Mammary epithelial cell (primary cell): ENCODE measurements at regions of chr3 and their contacts with region 1.

Region 1: GRCh38 chr3:50550079-50550741 is 17.3 kb downstream of the C3orf18 start:
- DNase-seq: peak; percentile 13
- H3K4me3 ChIP-seq: no peak overlapping the region
- H3K27ac ChIP-seq: no peak overlapping the region
- H3K4me1 ChIP-seq: peaks cover 19% of the 10 kb centered on the region
- H3K27me3 ChIP-seq: no peaks in the 10 kb centered on the region
- CTCF ChIP-seq: peak; percentile 75 to 81

Region 2: GRCh38 chr3:50436114-50436674 is 114.0 kb before region 1 on chr3:
- CTCF ChIA-PET with region 1: interaction called, 5 read pairs
- dilution Hi-C with region 1: no loop called
- in situ Hi-C with region 1: loop called (anchors 10 kb)
- intact Hi-C with region 1: loop called (anchors 1 kb)
- DNase-seq: peak; percentile 33
- H3K4me3 ChIP-seq: no peak overlapping the region
- H3K27ac ChIP-seq: no peak overlapping the region
- H3K4me1 ChIP-seq: no peaks in the 10 kb centered on the region
- H3K27me3 ChIP-seq: no peaks in the 10 kb centered on the region
- CTCF ChIP-seq: peak; percentile 80 to 91

Region 3: DNA sequence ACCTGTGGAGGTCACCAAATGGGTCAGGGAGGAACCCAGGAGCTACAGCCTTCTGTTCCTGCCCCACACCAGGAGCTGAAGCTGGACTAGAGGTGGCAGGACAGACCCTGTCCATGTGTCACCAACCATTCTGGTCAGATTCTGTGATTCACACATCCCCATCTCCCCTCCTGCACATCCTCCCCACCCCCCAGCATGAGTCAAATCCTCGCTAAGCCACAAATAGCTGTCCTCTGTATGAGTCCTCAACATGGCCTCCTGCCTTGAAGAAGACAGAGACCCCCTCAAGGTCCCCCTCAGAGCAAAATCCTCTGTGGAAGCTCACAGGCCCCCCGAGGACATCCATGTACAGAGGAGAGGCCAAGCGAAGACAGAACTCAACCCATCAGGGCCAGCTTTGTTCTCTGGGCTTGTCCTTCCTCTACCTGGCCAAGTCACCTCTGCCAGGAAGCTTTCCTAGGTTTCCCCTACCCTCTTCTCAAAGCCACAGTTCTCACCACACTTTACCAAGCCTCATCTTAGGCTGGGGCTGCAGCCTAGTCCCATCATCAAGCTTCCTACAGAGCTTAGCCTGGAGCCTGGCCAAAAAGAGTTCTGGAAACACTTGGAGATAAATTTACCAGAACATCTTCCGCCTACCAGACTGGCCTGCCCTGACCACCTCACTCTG is 63.9 kb before region 1 on chr3:
- CTCF ChIA-PET with region 1: no interaction called
- dilution Hi-C with region 1: loop called (anchors 5 kb)
- in situ Hi-C with region 1: no loop called
- intact Hi-C with region 1: no loop called
- DNase-seq: no peak
- H3K4me3 ChIP-seq: no peak overlapping the region
- H3K27ac ChIP-seq: no peak overlapping the region
- H3K4me1 ChIP-seq: no peaks in the 10 kb centered on the region
- H3K27me3 ChIP-seq: no peaks in the 10 kb centered on the region
- CTCF ChIP-seq: no peak

Region 4: GRCh38 chr3:50519471-50520089 is 30.6 kb before region 1 on chr3:
- CTCF ChIA-PET with region 1: no interaction called
- dilution Hi-C with region 1: no loop called
- in situ Hi-C with region 1: no loop called
- intact Hi-C with region 1: loop called (anchors 2 kb)
- DNase-seq: peak; percentile 38
- H3K4me3 ChIP-seq: no peak overlapping the region
- H3K27ac ChIP-seq: no peak overlapping the region
- H3K4me1 ChIP-seq: no peaks in the 10 kb centered on the region
- H3K27me3 ChIP-seq: no peaks in the 10 kb centered on the region
- CTCF ChIP-seq: peak; percentile 98